Caco-2 (cell line): ENCODE measurements at regions of chr4 and their contacts with region 1.

Region 1: DNA sequence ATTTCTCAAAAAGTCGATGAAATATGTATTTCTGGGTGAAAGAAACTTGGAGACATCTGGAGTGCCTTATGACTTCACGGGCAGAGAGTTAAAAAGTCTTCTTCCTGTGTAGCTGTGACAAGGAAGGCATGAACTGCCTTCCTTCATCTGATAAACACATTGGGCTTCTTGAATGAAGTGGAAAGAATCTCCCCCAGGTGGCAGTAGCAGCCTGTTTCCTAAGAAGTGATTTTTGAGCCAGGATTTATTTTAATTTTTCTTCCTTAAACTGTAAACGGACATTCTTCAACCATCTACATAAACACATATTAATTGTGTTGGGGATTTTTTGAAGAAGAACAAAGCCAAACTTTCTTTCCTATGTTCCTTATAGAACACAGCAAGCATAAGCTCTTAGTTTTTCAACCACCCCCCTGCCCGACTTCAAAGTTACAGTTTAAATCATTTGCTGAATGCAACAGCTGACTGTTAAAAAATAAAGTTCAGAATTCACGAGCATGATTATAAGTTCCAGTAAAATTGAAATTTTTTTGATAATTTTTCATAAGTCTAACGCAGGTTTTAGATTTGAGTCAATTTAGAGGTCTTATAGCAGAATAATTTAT is 980 bp upstream of the GIMD1 start:
- DNase-seq: peak; percentile 62 to 67
- H3K4me3 ChIP-seq: no peak overlapping the region
- H3K4me3 Mint-ChIP-seq: no peak overlapping the region
- H3K27ac Mint-ChIP-seq: peak overlapping the region; percentile 64
- H3K4me1 ChIP-seq: peaks cover 23% of the 10 kb centered on the region
- H3K4me1 Mint-ChIP-seq: peaks cover 14% of the 10 kb centered on the region
- H3K27me3 ChIP-seq: no peaks in the 10 kb centered on the region
- H3K27me3 Mint-ChIP-seq: no peaks in the 10 kb centered on the region
- CTCF ChIP-seq: peak; percentile 65 to 80

Region 2: GRCh38 chr4:106334741-106335470 is 34.7 kb before region 1 on chr4:
- CTCF ChIA-PET with region 1: no interaction called
- POLR2A ChIA-PET with region 1: no interaction called
- intact Hi-C with region 1: no loop called
- DNase-seq: no peak
- H3K4me3 ChIP-seq: no peak overlapping the region
- H3K4me3 Mint-ChIP-seq: no peak overlapping the region
- H3K27ac Mint-ChIP-seq: no peak overlapping the region
- H3K4me1 ChIP-seq: no peaks in the 10 kb centered on the region; the same call in 1 of the 2 replicates
- H3K4me1 Mint-ChIP-seq: no peaks in the 10 kb centered on the region
- H3K27me3 ChIP-seq: no peaks in the 10 kb centered on the region
- H3K27me3 Mint-ChIP-seq: no peaks in the 10 kb centered on the region
- CTCF ChIP-seq: no peak

Region 3: GRCh38 chr4:106409893-106410889 is 40.6 kb after region 1 on chr4:
- CTCF ChIA-PET with region 1: no interaction called
- POLR2A ChIA-PET with region 1: no interaction called
- intact Hi-C with region 1: loop called (anchors 2 kb)
- DNase-seq: no peak
- H3K4me3 ChIP-seq: no peak overlapping the region
- H3K4me3 Mint-ChIP-seq: no peak overlapping the region
- H3K27ac Mint-ChIP-seq: peak overlapping the region; percentile 54
- H3K4me1 ChIP-seq: peaks cover 57% of the 10 kb centered on the region
- H3K4me1 Mint-ChIP-seq: peaks cover 32% of the 10 kb centered on the region
- H3K27me3 ChIP-seq: no peaks in the 10 kb centered on the region
- H3K27me3 Mint-ChIP-seq: no peaks in the 10 kb centered on the region
- CTCF ChIP-seq: no peak

Region 4: GRCh38 chr4:106522839-106523238 is 153.3 kb after region 1 on chr4:
- CTCF ChIA-PET with region 1: interaction called, 3 read pairs
- POLR2A ChIA-PET with region 1: interaction called, 3 read pairs
- intact Hi-C with region 1: loop called (anchors 1 kb)
- DNase-seq: peak; percentile 43 to 54
- H3K4me3 ChIP-seq: no peak overlapping the region
- H3K4me3 Mint-ChIP-seq: no peak overlapping the region
- H3K27ac Mint-ChIP-seq: no peak overlapping the region
- H3K4me1 ChIP-seq: no peaks in the 10 kb centered on the region
- H3K4me1 Mint-ChIP-seq: no peaks in the 10 kb centered on the region
- H3K27me3 ChIP-seq: no peaks in the 10 kb centered on the region
- H3K27me3 Mint-ChIP-seq: no peaks in the 10 kb centered on the region
- CTCF ChIP-seq: peak; percentile 23 to 37

Region 5: GRCh38 chr4:106569146-106570031 is 199.8 kb after region 1 on chr4:
- CTCF ChIA-PET with region 1: no interaction called
- POLR2A ChIA-PET with region 1: no interaction called
- intact Hi-C with region 1: no loop called
- DNase-seq: no peak
- H3K4me3 ChIP-seq: no peak overlapping the region
- H3K4me3 Mint-ChIP-seq: no peak overlapping the region
- H3K27ac Mint-ChIP-seq: no peak overlapping the region
- H3K4me1 ChIP-seq: no peaks in the 10 kb centered on the region
- H3K4me1 Mint-ChIP-seq: no peaks in the 10 kb centered on the region
- H3K27me3 ChIP-seq: no peaks in the 10 kb centered on the region
- H3K27me3 Mint-ChIP-seq: no peaks in the 10 kb centered on the region
- CTCF ChIP-seq: no peak

Region 6: DNA sequence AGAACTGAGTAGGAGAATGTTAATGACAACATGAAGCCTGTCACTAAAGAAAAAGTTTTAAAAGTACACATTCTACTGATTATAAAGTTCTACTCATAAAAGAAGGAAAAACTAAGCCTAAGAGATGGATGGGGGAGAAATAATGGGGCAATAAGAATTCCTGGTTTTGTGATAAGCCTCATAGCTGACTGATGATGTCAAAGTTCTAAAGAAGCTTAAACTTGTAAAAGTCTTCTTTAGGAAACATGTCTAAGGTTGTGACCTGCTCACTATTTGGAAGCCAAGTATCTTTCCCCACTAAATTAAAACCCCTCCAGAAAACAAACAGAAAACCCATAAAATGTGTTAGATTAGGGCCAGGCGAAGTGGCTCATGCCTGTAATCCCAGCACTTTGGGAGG is 232.0 kb after region 1 on chr4:
- CTCF ChIA-PET with region 1: no interaction called
- POLR2A ChIA-PET with region 1: no interaction called
- intact Hi-C with region 1: loop called (anchors 1 kb)
- DNase-seq: peak in 1 of 2 experiments; percentile 35
- H3K4me3 ChIP-seq: no peak overlapping the region
- H3K4me3 Mint-ChIP-seq: peak overlapping the region; percentile 9
- H3K27ac Mint-ChIP-seq: peak overlapping the region; percentile 67
- H3K4me1 ChIP-seq: peaks cover 35% of the 10 kb centered on the region
- H3K4me1 Mint-ChIP-seq: peaks cover 6% of the 10 kb centered on the region
- H3K27me3 ChIP-seq: no peaks in the 10 kb centered on the region
- H3K27me3 Mint-ChIP-seq: no peaks in the 10 kb centered on the region
- CTCF ChIP-seq: no peak

Region 7: GRCh38 chr4:106809076-106809475 is 439.5 kb after region 1 on chr4:
- CTCF ChIA-PET with region 1: interaction called, 10 read pairs
- POLR2A ChIA-PET with region 1: no interaction called
- intact Hi-C with region 1: loop called (anchors 1 kb)
- DNase-seq: peak; percentile 40
- H3K4me3 ChIP-seq: no peak overlapping the region
- H3K4me3 Mint-ChIP-seq: no peak overlapping the region
- H3K27ac Mint-ChIP-seq: no peak overlapping the region
- H3K4me1 ChIP-seq: peaks cover 8% of the 10 kb centered on the region
- H3K4me1 Mint-ChIP-seq: peaks cover 13% of the 10 kb centered on the region
- H3K27me3 ChIP-seq: no peaks in the 10 kb centered on the region
- H3K27me3 Mint-ChIP-seq: no peaks in the 10 kb centered on the region
- CTCF ChIP-seq: peak; percentile 34 to 43

Region 8: DNA sequence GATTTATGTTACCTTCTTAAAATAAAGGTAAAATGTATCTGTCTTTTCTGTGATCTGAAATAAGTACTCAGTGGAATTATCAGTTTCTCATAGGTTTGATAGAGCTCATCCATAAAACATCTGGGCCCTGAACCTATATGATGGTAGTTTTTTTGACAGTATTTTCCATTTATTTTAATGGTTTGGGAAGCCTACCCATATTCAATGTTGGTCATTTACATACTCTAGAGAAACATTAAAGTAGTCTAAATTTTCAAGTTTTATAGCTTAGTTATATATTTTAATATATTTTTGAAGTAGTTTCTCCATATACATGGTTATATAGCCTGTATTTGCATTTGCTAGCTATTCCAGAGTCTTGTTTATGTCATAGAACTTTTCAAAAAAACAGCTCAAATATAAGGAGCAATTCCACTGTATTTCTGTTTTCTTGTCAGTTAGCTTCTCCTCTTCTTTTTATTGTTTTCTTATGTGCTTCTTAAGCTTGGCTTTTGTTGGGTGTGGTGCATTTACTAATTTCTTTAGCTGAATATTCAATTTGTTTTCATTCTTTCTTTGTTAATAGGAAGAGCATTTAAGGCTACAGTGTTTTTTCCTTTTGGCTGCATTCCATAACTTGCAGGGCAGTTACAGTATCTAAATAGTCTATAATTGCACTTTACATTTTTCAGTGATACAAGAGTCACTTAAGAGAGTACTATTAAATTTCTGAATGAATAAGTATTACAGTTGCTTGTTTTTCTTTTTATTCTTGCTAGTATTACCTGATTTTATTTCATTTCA is 485.2 kb after region 1 on chr4:
- CTCF ChIA-PET with region 1: no interaction called
- POLR2A ChIA-PET with region 1: no interaction called
- intact Hi-C with region 1: no loop called
- DNase-seq: no peak
- H3K4me3 ChIP-seq: no peak overlapping the region
- H3K4me3 Mint-ChIP-seq: no peak overlapping the region
- H3K27ac Mint-ChIP-seq: no peak overlapping the region
- H3K4me1 ChIP-seq: no peaks in the 10 kb centered on the region
- H3K4me1 Mint-ChIP-seq: no peaks in the 10 kb centered on the region
- H3K27me3 ChIP-seq: no peaks in the 10 kb centered on the region
- H3K27me3 Mint-ChIP-seq: peaks cover 9% of the 10 kb centered on the region
- CTCF ChIP-seq: no peak